Mammary epithelial cell (primary cell): ENCODE measurements at regions of chr17 and their contacts with region 1.

Region 1: GRCh38 chr17:82787081-82787848 is 35.4 kb downstream of the TBCD start:
- DNase-seq: peak; percentile 97
- H3K4me3 ChIP-seq: peak overlapping the region in 1 of 3 experiments; percentile 5
- H3K27ac ChIP-seq: peak overlapping the region; percentile 86
- H3K4me1 ChIP-seq: peaks cover 18% of the 10 kb centered on the region
- H3K27me3 ChIP-seq: no peaks in the 10 kb centered on the region
- CTCF ChIP-seq: peak in 1 of 2 donors; percentile 1

Region 2: GRCh38 chr17:82830249-82830661 is 43.0 kb after region 1 on chr17:
- CTCF ChIA-PET with region 1: no interaction called
- dilution Hi-C with region 1: loop called (anchors 5 kb)
- in situ Hi-C with region 1: loop called (anchors 5 kb)
- intact Hi-C with region 1: no loop called
- DNase-seq: no peak
- H3K4me3 ChIP-seq: no peak overlapping the region
- H3K27ac ChIP-seq: no peak overlapping the region
- H3K4me1 ChIP-seq: peaks cover 12% of the 10 kb centered on the region
- H3K27me3 ChIP-seq: no peaks in the 10 kb centered on the region
- CTCF ChIP-seq: no peak

Region 3: DNA sequence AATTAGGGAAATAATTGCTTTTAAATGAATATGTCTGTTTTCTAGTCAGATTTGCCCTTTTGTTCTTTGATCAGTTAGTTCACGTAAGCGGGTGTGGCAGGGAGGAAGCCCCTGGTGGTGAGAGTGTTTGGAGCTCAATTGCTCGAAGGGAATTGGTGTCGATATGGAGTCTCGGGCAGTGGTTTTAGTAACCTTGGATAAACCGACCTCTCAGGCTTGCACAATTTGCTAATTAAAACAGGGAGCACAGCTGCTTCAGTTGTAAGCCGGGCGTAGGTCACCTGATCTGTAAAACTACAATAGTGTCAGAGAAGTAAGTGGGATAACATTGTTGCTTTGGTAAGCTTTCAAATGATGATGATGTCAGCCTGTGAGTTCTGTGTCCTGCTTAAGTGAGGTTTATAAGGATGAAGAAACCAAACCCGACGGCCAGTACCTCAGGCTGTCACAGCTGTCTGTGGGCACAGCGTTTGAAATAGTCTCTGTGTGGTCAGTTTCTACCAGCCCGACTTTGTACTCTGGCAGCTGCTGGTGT is 49.6 kb after region 1 on chr17:
- CTCF ChIA-PET with region 1: no interaction called
- dilution Hi-C with region 1: loop called (anchors 5 kb)
- in situ Hi-C with region 1: loop called (anchors 5 kb)
- intact Hi-C with region 1: loop called (anchors 1 kb)
- DNase-seq: no peak
- H3K4me3 ChIP-seq: no peak overlapping the region
- H3K27ac ChIP-seq: peak overlapping the region; percentile 100
- H3K4me1 ChIP-seq: peaks cover 38% of the 10 kb centered on the region
- H3K27me3 ChIP-seq: no peaks in the 10 kb centered on the region
- CTCF ChIP-seq: peak; percentile 2 to 14

Region 4: DNA sequence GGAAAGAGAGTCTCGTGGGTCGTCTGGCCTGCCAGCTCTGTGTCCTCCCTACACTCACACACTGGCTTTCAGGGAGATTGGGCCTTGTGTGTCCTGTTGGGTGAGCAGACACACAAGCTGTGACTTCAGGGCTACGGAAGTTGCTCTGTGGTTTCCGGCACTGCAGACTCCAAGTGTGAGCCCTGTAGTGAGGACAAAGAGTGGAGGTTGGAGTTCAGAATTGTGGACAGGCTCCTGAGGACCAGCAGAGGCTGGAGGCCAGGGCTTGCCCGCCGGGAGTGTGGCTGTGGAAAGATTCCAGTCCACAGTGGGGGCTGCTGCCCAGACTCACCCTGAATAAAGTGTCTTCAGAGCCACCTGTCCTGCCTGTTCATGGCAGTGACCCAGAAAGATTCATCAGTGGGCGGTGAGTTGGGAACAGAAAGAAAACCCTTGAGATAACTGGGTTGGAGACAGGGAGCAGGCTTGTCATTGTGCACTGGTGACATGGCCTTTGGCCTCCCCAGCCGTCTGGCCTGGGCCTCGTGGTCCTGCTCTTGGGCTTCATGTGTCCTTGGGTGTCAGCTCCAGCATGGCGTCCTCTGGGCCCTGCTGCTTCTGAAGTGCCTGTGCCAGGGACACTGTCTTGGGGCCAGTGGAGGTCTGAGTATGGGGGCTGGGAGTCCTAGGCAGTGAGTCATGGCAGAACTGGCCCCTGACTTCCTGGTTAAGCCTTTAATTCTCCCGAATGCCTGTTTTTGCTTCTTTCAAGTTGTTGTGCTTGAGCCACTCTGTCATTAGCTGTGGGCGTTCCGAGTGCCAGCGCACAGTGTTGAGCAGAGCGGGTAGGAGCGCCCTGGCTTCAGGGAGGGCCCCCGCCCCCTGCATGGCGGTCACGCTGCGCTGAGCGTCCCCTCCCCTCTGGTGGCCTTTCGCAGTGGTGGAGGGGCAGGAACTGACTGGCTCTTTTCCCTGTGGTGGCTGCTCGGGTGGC is 72.5 kb after region 1 on chr17:
- CTCF ChIA-PET with region 1: no interaction called
- dilution Hi-C with region 1: no loop called
- in situ Hi-C with region 1: no loop called
- intact Hi-C with region 1: loop called (anchors 5 kb)
- DNase-seq: no peak
- H3K4me3 ChIP-seq: no peak overlapping the region
- H3K27ac ChIP-seq: no peak overlapping the region
- H3K4me1 ChIP-seq: peaks cover 30% of the 10 kb centered on the region
- H3K27me3 ChIP-seq: no peaks in the 10 kb centered on the region
- CTCF ChIP-seq: no peak

Region 5: GRCh38 chr17:82871056-82871903 is 84.0 kb after region 1 on chr17:
- CTCF ChIA-PET with region 1: no interaction called
- dilution Hi-C with region 1: no loop called
- in situ Hi-C with region 1: loop called (anchors 5 kb)
- intact Hi-C with region 1: loop called (anchors 1 kb)
- DNase-seq: peak; percentile 21
- H3K4me3 ChIP-seq: no peak overlapping the region
- H3K27ac ChIP-seq: no peak overlapping the region
- H3K4me1 ChIP-seq: peaks cover 23% of the 10 kb centered on the region
- H3K27me3 ChIP-seq: no peaks in the 10 kb centered on the region
- CTCF ChIP-seq: peak in 1 of 2 donors; percentile 7

Region 6: DNA sequence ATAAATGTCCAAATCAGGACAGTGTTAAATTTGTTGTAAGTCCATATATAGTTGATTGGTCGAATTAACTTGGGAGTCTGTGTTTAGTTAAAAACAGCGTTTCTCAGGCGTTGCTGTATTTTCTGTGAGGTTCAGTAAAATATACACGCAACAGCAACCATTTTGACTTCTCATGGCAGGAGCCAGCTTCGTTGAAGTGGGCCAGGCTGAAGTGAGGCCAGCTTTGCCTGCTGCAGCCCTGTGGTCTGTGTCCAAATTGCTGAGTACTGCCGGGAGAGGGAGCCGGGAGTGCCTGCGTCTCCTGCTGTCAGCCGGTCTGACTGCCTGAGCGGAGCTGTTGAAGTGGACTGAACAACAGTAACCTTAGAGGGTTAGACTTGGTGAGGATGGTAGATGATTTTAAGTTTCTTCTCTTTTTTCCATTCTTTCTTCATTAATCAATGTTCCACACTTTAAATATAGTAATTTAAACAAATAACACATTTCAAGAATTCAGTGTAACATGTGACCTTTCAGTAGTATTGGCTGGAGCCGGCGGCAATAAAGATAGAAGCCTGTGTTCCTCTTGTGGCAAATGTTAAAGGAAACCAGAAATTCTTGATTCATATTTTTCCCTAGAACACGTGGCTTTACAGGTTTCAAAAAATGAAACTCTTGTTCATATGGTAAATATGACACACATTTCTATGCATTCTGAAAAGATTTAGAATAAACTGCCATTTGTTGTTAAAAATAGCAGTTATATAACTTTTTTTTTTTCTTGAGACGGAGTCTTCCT is 89.5 kb after region 1 on chr17:
- CTCF ChIA-PET with region 1: no interaction called
- dilution Hi-C with region 1: no loop called
- in situ Hi-C with region 1: loop called (anchors 5 kb)
- intact Hi-C with region 1: loop called (anchors 1 kb)
- DNase-seq: peak; percentile 81
- H3K4me3 ChIP-seq: no peak overlapping the region
- H3K27ac ChIP-seq: peak overlapping the region; percentile 100
- H3K4me1 ChIP-seq: peaks cover 41% of the 10 kb centered on the region
- H3K27me3 ChIP-seq: no peaks in the 10 kb centered on the region
- CTCF ChIP-seq: peak; percentile 24 to 65

Region 7: DNA sequence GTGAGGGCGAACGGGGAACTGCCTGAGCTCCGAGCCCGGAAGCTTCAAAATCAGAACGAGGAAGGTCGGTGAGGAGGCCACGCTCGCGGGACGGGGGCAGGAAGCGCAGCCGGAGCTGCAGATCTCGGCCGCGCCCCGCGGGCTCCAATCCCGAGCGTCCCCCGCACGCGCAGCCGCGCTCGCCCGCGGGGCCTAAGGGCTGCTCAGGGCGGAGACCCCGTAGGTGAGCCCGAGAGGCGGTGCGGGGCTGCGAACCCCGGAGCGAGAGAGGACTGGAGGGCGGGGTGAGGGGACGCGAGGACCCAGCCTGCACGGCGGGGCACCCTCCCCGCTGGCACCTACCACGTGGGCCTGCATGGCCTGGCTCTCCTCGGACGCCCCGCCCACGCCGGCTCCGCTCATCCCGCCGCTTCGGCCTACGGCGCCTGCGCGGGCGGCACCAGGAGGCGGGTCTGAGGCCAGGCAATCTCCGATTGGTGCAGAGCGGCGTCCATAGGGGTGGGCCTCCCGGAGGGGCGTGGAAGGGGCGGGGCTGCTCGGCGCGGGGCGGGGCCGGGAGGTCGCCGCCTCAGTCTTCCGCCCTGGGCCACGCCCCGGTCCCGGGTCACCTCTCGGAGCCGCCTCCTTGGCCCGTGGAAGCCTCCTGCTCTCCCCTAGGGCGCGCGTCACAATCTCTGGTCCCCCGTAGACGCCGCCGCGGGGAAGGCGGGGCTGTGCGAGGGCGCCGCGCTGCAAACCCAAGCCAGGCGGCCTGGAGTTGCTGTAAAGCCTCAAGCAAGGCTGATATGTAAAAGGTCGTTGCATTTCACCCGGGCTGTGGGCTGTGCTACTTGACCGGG is 264.3 kb after region 1 on chr17:
- CTCF ChIA-PET with region 1: no interaction called
- dilution Hi-C with region 1: no loop called
- in situ Hi-C with region 1: no loop called
- intact Hi-C with region 1: loop called (anchors 2 kb)
- DNase-seq: peak; percentile 95
- H3K4me3 ChIP-seq: peak overlapping the region; percentile 59 to 79 (median 71)
- H3K27ac ChIP-seq: peak overlapping the region; percentile 29
- H3K4me1 ChIP-seq: peaks cover 26% of the 10 kb centered on the region
- H3K27me3 ChIP-seq: no peaks in the 10 kb centered on the region
- CTCF ChIP-seq: peak in 1 of 2 donors; percentile 12